Astrocyte of the cerebellum (primary cell): ENCODE measurements at regions of chr16 and their contacts with region 1.

Region 1: GRCh38 chr16:986925-987582 is 5.5 kb downstream of the SOX8 start:
- DNase-seq: no peak
- H3K4me3 ChIP-seq: no peak overlapping the region
- CTCF ChIP-seq: no peak

Region 2: GRCh38 chr16:832652-833336 is 154.3 kb before region 1 on chr16:
- in situ Hi-C with region 1: loop called (anchors 5 kb)
- DNase-seq: no peak
- H3K4me3 ChIP-seq: no peak overlapping the region
- CTCF ChIP-seq: no peak

Region 3: DNA sequence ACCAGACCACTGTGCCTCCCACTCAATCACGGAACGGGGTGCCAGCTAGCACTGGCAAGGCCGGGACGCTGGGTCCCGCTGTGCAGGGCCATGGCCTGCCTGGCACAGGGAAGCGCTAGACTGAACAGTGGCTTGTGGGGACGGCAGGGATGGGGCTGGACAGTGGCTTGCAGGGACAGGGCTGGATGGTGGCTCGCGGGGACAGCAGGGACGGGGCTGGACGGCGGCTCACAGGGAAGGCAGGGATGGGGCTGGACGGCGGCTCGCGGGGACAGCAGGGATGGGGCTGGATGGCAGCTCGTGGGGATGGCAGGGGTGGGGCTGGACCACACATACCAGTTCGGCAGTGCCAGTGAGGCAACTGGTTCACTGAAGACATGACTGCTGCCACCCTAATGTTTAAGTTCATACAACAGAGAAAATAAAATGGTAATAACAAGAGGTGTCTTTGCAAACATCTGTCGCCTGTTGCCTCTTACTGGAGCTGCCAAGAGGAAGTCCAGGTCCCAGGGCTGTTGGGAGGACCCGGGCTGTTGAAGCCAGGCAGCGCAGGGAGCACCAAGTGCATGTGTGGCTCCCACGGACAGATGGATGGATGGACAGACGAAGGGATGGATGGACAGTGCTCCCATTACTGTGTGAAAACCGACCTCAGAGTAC is 48.8 kb before region 1 on chr16:
- in situ Hi-C with region 1: loop called (anchors 5 kb)
- DNase-seq: no peak
- H3K4me3 ChIP-seq: no peak overlapping the region
- CTCF ChIP-seq: no peak

Region 4: GRCh38 chr16:1036726-1037393 is 49.8 kb after region 1 on chr16:
- in situ Hi-C with region 1: loop called (anchors 5 kb)
- DNase-seq: no peak
- H3K4me3 ChIP-seq: no peak overlapping the region
- CTCF ChIP-seq: no peak

Region 5: DNA sequence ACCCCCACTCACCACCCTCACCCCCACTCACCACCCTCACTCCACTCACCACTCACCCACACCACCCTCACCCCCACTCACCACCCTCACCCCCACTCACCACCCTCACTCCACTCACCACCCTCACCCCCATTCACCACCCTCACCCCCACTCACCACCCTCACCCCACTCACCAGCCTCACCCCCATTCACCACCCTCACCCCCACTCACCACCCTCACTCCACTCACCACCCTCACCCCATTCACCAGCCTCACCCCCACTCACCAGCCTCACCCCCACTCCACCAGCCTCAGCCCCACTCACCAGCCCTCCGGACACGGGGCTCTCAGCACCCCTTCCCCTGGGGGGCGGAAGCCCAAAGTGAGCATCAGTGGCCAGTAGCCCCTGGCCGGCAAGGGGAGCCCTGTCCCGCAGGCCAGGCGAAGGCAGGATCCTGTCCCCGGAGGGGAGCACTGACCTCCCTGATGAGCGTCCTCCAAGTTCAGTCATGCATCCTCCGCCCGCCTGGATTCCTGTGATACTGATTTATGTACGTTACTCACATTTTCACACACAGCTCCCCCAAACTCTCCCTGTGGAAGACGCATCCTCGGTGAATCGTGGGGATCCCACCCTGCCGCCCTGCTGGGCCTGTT is 127.0 kb after region 1 on chr16:
- in situ Hi-C with region 1: loop called (anchors 5 kb)
- DNase-seq: no peak
- H3K4me3 ChIP-seq: no peak overlapping the region
- CTCF ChIP-seq: no peak